Mammary epithelial cell (primary cell): ENCODE measurements at regions of chr7 and their contacts with region 1.

Region 1: DNA sequence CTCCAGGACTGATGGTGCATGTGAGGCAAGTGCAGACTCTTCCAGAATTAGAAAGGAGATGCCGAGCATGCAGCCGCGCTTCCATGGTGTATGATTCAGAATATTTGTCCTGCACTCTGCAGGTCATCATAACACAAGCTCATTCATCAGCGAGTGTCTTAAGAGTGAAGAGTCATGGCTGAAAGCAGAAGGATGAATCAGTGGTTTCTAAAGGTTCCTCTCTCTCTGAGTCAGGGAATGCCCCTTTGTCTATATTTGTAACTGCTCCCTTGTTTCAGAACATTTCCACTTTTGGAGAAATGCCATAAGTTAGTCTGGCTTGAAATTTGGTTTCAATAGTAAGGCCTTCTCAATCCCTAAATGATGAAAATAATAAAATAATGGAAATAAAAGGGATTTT is 52.3 kb downstream of the HECW1 start:
- DNase-seq: peak; percentile 99
- H3K4me3 ChIP-seq: no peak overlapping the region
- H3K27ac ChIP-seq: peak overlapping the region; percentile 81
- H3K4me1 ChIP-seq: peaks cover 15% of the 10 kb centered on the region
- H3K27me3 ChIP-seq: no peaks in the 10 kb centered on the region
- CTCF ChIP-seq: no peak

Region 2: DNA sequence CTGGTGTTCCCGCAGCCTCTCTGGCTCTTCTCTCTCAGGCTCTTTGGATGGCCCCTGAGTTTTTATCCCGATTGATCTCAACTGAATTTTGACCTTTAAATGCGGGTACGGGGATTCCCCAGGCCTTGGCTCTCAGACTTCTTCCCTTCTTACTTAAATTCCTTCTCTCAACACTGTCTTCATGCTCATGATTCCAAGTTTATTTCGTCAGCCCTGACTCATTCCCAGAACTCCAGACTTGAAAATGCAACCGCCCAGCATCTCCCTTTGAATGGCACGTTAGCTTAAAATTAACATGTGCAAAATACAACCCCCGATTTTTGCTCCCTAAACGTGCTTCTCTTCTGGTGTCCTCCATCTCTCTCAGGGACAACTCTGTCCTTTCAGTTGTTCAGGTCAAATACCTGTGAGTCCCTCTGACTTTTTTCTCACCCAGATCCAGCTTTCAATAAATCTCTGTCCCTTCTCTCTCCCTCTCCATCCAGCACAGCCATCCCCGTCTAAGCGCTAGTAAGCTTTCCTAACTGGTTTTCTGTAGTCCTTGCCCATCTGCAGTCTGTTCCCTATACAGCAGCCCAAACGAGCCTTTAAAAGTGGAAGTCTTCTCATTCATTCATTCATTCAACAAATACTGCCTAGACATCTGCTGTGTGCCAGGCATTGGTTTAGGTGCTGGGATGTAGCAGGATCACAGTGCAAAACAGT is 45.2 kb before region 1 on chr7:
- CTCF ChIA-PET with region 1: no interaction called
- dilution Hi-C with region 1: loop called (anchors 5 kb)
- in situ Hi-C with region 1: no loop called
- intact Hi-C with region 1: no loop called
- DNase-seq: no peak
- H3K4me3 ChIP-seq: no peak overlapping the region
- H3K27ac ChIP-seq: no peak overlapping the region
- H3K4me1 ChIP-seq: no peaks in the 10 kb centered on the region
- H3K27me3 ChIP-seq: peaks cover 16% of the 10 kb centered on the region
- CTCF ChIP-seq: no peak

Region 3: GRCh38 chr7:43199371-43200160 is 34.8 kb after region 1 on chr7:
- CTCF ChIA-PET with region 1: no interaction called
- dilution Hi-C with region 1: no loop called
- in situ Hi-C with region 1: no loop called
- intact Hi-C with region 1: loop called (anchors 2 kb)
- DNase-seq: no peak
- H3K4me3 ChIP-seq: no peak overlapping the region
- H3K27ac ChIP-seq: no peak overlapping the region
- H3K4me1 ChIP-seq: no peaks in the 10 kb centered on the region
- H3K27me3 ChIP-seq: no peaks in the 10 kb centered on the region
- CTCF ChIP-seq: no peak

Region 4: DNA sequence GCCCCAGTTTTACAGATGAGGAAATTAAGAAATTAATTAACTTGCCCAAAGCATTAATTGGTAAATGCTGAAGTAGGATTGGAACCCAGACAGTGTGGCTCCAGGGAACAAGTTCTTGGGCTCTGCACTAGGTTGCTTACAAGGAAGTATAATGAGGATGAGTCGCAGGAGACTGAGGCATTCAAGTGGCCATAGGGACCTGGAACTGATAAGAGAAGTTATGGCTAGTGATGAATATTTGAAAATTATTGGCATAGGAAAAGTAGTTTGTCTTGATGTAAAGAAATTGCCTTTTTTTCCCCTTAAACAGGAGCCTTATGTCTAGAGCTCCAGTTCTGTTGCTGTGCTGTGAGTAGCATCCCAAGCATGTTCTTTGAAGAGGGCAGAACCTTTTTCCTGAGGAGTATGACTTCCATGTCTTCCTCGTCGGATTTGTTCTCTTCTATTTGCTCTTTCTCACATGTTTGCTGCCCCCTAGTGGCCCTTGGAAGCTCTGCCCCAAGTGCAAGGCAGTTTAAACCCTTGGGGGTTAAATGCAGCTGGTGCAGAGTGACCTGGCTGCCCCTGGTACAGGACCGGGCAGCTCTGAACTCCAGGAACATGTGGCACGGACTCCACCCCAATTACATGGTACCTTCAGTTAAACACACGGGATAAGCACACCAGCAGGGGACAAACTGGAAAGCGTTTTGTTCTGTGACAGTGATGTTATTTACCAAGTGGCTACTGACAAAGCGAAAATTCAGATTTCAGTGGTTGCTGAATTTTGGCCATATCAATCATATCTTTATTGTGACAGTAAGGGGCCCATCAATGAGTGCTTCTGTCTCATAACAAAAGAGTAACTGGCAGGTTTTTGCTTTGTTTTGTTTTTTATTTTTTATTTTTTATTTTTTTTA is 96.5 kb after region 1 on chr7:
- CTCF ChIA-PET with region 1: no interaction called
- dilution Hi-C with region 1: no loop called
- in situ Hi-C with region 1: no loop called
- intact Hi-C with region 1: no loop called
- DNase-seq: peak; percentile 65
- H3K4me3 ChIP-seq: no peak overlapping the region
- H3K27ac ChIP-seq: no peak overlapping the region
- H3K4me1 ChIP-seq: peaks cover 3% of the 10 kb centered on the region
- H3K27me3 ChIP-seq: no peaks in the 10 kb centered on the region
- CTCF ChIP-seq: peak; percentile 94 to 95

Region 5: GRCh38 chr7:44132039-44132438 is 967.3 kb after region 1 on chr7:
- CTCF ChIA-PET with region 1: no interaction called
- dilution Hi-C with region 1: no loop called
- in situ Hi-C with region 1: no loop called
- intact Hi-C with region 1: no loop called
- DNase-seq: no peak
- H3K4me3 ChIP-seq: no peak overlapping the region
- H3K27ac ChIP-seq: no peak overlapping the region
- H3K4me1 ChIP-seq: no peaks in the 10 kb centered on the region
- H3K27me3 ChIP-seq: no peaks in the 10 kb centered on the region
- CTCF ChIP-seq: no peak